AG04450 (cell line): ENCODE measurements at regions of chr19 and their contacts with region 1.

Region 1: DNA sequence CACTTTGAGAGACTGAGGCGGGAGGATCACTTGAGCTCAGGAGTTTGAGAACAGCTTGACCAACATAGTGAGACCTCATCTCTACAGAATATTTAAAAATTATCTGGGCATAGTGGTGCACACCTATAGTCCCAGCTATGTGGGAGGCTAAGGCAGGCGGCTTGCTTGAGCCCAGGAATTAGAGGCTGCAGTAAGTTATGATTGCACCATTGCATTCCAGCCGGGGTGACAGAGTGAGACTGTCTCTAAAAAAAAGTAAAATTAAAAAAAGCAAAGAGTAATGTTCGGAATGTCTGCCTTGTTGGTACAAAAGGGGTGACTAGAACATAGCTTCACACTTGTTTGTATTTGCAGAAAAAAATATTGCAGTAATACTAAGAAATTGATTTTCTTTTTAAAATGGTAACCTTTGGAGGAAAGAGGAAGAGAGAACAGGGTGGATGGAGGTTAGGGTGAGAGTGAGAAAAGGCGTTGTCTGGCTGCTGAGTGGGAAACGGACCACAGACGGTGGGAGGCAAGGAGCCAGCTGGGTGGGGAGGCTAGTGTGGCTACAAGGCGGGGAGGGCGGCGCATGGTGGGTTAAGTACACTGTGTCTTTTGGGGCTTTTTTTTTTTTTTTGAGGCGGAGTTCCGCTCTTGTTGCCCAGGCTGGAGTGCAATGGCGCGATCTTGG is 10.2 kb downstream of the PPP1R14A start:
- DNase-seq: no peak
- H3K4me3 ChIP-seq: no peak overlapping the region
- H3K27ac ChIP-seq: no peak overlapping the region
- H3K27me3 ChIP-seq: no peaks in the 10 kb centered on the region
- CTCF ChIP-seq: no peak

Region 2: DNA sequence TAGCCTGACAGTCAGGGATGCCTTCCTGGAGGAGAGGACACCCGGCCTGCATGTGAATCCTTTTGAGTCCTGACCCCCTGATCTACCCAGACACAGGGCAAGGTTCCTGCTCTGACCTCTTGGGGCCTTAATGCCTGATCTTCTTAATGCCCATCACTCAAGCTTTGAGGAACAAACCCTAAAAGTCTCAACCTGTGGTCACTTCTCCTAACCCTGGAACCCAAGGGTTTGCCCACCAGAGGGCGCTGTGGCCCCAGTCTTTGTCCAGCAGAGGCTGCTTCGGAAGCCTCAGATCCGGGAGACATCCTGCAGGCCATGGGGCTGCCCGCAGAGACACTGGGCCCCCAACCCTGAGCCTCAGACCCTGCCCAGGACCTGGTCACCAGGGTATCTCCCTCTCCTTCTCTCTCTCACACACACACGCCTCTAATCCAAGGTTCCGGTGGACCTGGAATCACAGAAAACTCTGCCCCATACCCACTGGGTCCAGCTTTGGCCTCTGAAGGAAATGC is 12.2 kb before region 1 on chr19:
- CTCF ChIA-PET with region 1: interaction called, 46 read pairs
- POLR2A ChIA-PET with region 1: no interaction called
- DNase-seq: peak; percentile 27
- H3K4me3 ChIP-seq: no peak overlapping the region
- H3K27ac ChIP-seq: no peak overlapping the region
- H3K27me3 ChIP-seq: peaks cover 5% of the 10 kb centered on the region
- CTCF ChIP-seq: peak; percentile 89

Region 3: GRCh38 chr19:38290631-38291157 is 44.7 kb after region 1 on chr19:
- CTCF ChIA-PET with region 1: interaction called, 10 read pairs
- POLR2A ChIA-PET with region 1: interaction called, 3 read pairs
- DNase-seq: peak; percentile 86
- H3K4me3 ChIP-seq: no peak overlapping the region
- H3K27ac ChIP-seq: peak overlapping the region; percentile 80
- H3K27me3 ChIP-seq: no peaks in the 10 kb centered on the region
- CTCF ChIP-seq: no peak

Region 4: GRCh38 chr19:38335949-38336637 is 90.1 kb after region 1 on chr19:
- CTCF ChIA-PET with region 1: interaction called, 123 read pairs
- POLR2A ChIA-PET with region 1: no interaction called
- DNase-seq: peak; percentile 83
- H3K4me3 ChIP-seq: peak overlapping the region; percentile 94
- H3K27ac ChIP-seq: peak overlapping the region; percentile 70
- H3K27me3 ChIP-seq: no peaks in the 10 kb centered on the region
- CTCF ChIP-seq: no peak